ENCODE measurements at regions of chr1 and their contacts with region 1.

Region 1: DNA sequence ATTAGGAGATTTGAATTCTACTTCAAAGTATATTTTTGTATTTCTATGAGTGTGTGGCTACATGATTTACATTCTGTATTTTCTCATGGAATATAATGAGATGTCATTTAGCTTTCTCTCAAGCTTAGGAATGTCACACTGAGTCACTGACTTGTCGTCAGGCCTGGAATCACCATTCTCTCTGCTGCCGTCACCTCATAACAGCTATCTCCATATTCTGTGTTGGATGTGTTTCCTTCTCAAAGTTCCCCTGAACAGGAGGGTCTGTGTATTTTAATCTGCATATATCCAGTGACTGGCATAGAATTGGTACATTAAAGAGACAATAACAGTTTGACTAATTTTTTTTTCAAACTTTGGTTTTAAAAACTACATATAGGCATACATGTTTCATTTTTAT is 35.9 kb downstream of the LYPLAL1 start:
- DNase-seq: no peak
- ATAC-seq: no peak
- H3K4me3 ChIP-seq: no peak overlapping the region
- H3K27ac ChIP-seq: no peak overlapping the region
- H3K4me1 ChIP-seq: peaks cover 24% of the 10 kb centered on the region
- H3K27me3 ChIP-seq: no peaks in the 10 kb centered on the region
- CTCF ChIP-seq: no peak
- EP300 ChIP-seq: no peak
- POLR2A ChIP-seq: no peak
- RAD21 ChIP-seq: no peak

Region 2: GRCh38 chr1:219385786-219386427 is 176.3 kb after region 1 on chr1:
- CTCF ChIA-PET with region 1: interaction called, 12 read pairs
- POLR2A ChIA-PET with region 1: no interaction called
- in situ Hi-C with region 1: no loop called
- intact Hi-C with region 1: loop called (anchors 1 kb)
- DNase-seq: peak; percentile 69
- ATAC-seq: peak; percentile 98
- H3K4me3 ChIP-seq: no peak overlapping the region
- H3K27ac ChIP-seq: no peak overlapping the region
- H3K4me1 ChIP-seq: peaks cover 32% of the 10 kb centered on the region
- H3K27me3 ChIP-seq: no peaks in the 10 kb centered on the region
- CTCF ChIP-seq: peak; percentile 89
- EP300 ChIP-seq: no peak
- POLR2A ChIP-seq: no peak
- RAD21 ChIP-seq: peak; percentile 88

Region 3: GRCh38 chr1:219566951-219567947 is 357.7 kb after region 1 on chr1:
- CTCF ChIA-PET with region 1: no interaction called
- POLR2A ChIA-PET with region 1: no interaction called
- in situ Hi-C with region 1: no loop called
- intact Hi-C with region 1: loop called (anchors 10 kb)
- DNase-seq: peak; percentile 20
- ATAC-seq: peak; percentile 57; the same call in 2 of the 3 replicates
- H3K4me3 ChIP-seq: no peak overlapping the region
- H3K27ac ChIP-seq: no peak overlapping the region
- H3K4me1 ChIP-seq: peaks cover 15% of the 10 kb centered on the region
- H3K27me3 ChIP-seq: no peaks in the 10 kb centered on the region; a peak in 1 of 5 replicates
- CTCF ChIP-seq: peak; percentile 64
- EP300 ChIP-seq: no peak
- POLR2A ChIP-seq: no peak
- RAD21 ChIP-seq: no peak

Measured in HepG2 (cell line).